ENCODE measurements at regions of chr5 and their contacts with region 1.

Region 1: GRCh38 chr5:126449751-126450271 is 26.6 kb downstream of the GRAMD2B start:
- DNase-seq: peak; percentile 85
- H3K4me3 Mint-ChIP-seq: peak overlapping the region; percentile 81
- H3K27ac Mint-ChIP-seq: peak overlapping the region; percentile 100
- H3K4me1 Mint-ChIP-seq: peaks cover 76% of the 10 kb centered on the region
- H3K27me3 Mint-ChIP-seq: no peaks in the 10 kb centered on the region

Region 2: GRCh38 chr5:124583469-124584350 is 1866.1 kb before region 1 on chr5:
- CTCF ChIA-PET with region 1: no interaction called
- POLR2A ChIA-PET with region 1: no interaction called
- intact Hi-C with region 1: loop called (anchors 10 kb)
- DNase-seq: peak; percentile 38
- H3K4me3 Mint-ChIP-seq: no peak overlapping the region
- H3K27ac Mint-ChIP-seq: no peak overlapping the region
- H3K4me1 Mint-ChIP-seq: peaks cover 13% of the 10 kb centered on the region
- H3K27me3 Mint-ChIP-seq: peaks cover 2% of the 10 kb centered on the region

Region 3: DNA sequence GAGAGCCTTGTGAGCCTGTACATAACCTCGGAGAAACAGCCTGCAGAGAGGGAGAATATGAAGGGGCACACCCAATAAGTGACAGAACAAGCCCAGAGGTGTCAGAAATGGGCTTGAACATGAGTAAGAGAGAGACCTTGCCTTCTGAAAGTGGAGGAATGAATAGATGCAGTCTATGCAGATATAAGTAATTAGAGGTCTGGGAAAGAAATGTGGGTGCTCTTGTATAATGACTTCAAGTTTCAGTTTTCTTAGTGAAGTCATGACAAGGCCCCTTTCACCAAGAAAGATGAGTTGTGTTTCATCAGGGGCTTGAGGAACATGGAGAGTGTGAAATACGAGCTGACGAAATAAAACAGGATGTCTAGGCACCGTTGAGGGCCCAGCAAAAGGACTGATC is 11.5 kb before region 1 on chr5:
- CTCF ChIA-PET with region 1: interaction called, 6 read pairs
- POLR2A ChIA-PET with region 1: interaction called, 10 read pairs
- intact Hi-C with region 1: loop called (anchors 1 kb)
- DNase-seq: peak; percentile 42
- H3K4me3 Mint-ChIP-seq: peak overlapping the region; percentile 9
- H3K27ac Mint-ChIP-seq: peak overlapping the region; percentile 82
- H3K4me1 Mint-ChIP-seq: peaks cover 29% of the 10 kb centered on the region
- H3K27me3 Mint-ChIP-seq: no peaks in the 10 kb centered on the region

Region 4: DNA sequence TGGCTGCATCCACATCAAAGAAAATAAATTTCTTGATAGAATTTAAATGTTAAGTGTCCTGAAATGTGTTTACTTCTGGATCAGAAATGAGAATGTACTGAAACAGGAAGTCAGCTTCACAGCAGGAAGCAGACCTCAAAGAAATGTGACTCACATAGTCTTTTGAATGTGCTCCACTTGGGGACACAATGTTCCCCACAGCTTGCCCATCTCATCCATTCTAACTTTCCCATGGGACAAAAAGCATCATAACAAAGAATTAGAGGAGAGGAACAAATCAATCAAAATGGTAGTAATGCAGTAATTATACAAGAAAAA is 59.1 kb after region 1 on chr5:
- CTCF ChIA-PET with region 1: no interaction called
- POLR2A ChIA-PET with region 1: interaction called, 4 read pairs
- intact Hi-C with region 1: loop called (anchors 2 kb)
- DNase-seq: no peak
- H3K4me3 Mint-ChIP-seq: peak overlapping the region; percentile 47
- H3K27ac Mint-ChIP-seq: peak overlapping the region; percentile 78
- H3K4me1 Mint-ChIP-seq: peaks cover 27% of the 10 kb centered on the region
- H3K27me3 Mint-ChIP-seq: no peaks in the 10 kb centered on the region

Region 5: GRCh38 chr5:126745259-126745992 is 295.6 kb after region 1 on chr5:
- CTCF ChIA-PET with region 1: no interaction called
- POLR2A ChIA-PET with region 1: no interaction called
- intact Hi-C with region 1: loop called (anchors 5 kb)
- DNase-seq: no peak
- H3K4me3 Mint-ChIP-seq: no peak overlapping the region
- H3K27ac Mint-ChIP-seq: no peak overlapping the region
- H3K4me1 Mint-ChIP-seq: peaks cover 30% of the 10 kb centered on the region
- H3K27me3 Mint-ChIP-seq: peaks cover 1% of the 10 kb centered on the region

Region 6: DNA sequence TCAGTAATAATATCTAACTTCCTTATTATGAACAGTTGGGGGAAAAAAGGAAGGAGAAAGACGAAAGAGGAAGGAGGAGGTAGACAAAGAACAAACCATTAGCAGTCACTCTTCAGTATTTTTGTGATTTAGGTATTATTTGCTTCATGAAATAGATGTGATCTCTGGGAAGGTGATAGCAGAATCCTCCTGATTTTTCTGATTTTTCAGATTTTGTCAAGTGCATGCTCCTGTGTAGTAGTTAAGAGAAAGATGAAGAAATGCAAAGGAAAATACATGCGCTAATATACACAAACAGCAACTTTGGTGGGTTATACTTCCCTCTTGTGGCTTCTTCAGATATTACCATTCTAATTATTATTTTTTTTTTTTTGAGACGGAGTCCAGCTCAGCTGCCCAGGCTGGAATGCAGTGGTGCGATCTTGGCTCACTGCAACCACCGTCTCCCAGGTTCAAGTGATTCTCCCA is 358.7 kb after region 1 on chr5:
- CTCF ChIA-PET with region 1: no interaction called
- POLR2A ChIA-PET with region 1: no interaction called
- intact Hi-C with region 1: loop called (anchors 2 kb)
- DNase-seq: no peak
- H3K4me3 Mint-ChIP-seq: no peak overlapping the region
- H3K27ac Mint-ChIP-seq: peak overlapping the region; percentile 16
- H3K4me1 Mint-ChIP-seq: peaks cover 55% of the 10 kb centered on the region
- H3K27me3 Mint-ChIP-seq: no peaks in the 10 kb centered on the region

Region 7: GRCh38 chr5:127320032-127320965 is 870.5 kb after region 1 on chr5:
- CTCF ChIA-PET with region 1: no interaction called
- POLR2A ChIA-PET with region 1: no interaction called
- intact Hi-C with region 1: loop called (anchors 5 kb)
- DNase-seq: peak; percentile 33
- H3K4me3 Mint-ChIP-seq: no peak overlapping the region
- H3K27ac Mint-ChIP-seq: no peak overlapping the region
- H3K4me1 Mint-ChIP-seq: peaks cover 13% of the 10 kb centered on the region
- H3K27me3 Mint-ChIP-seq: no peaks in the 10 kb centered on the region

Measured in activated CD4-positive, alpha-beta memory T cell treated with anti-CD3 and anti-CD28 coated beads for 36 hours (primary cell).